B cell (primary cell): ENCODE measurements at regions of chr10 and their contacts with region 1.

Region 1: GRCh38 chr10:71835671-71836595 is 15.1 kb downstream of the PSAP start:
- DNase-seq: peak; percentile 95
- ATAC-seq: peak; percentile 92
- H3K4me3 ChIP-seq: peak overlapping the region; percentile 7 to 49 (median 30)
- H3K4me3 Mint-ChIP-seq: peak overlapping the region; percentile 88
- H3K27ac ChIP-seq: peak overlapping the region; percentile 91 to 94
- H3K27ac Mint-ChIP-seq: peak overlapping the region; percentile 97
- H3K4me1 ChIP-seq: peaks cover 74 to 91% of the 10 kb centered on the region in 2 donors
- H3K4me1 Mint-ChIP-seq: peaks cover 79% of the 10 kb centered on the region
- H3K27me3 ChIP-seq: no peaks in the 10 kb centered on the region
- H3K27me3 Mint-ChIP-seq: no peaks in the 10 kb centered on the region
- CTCF ChIP-seq: no peak

Region 2: GRCh38 chr10:71696628-71697326 is 139.2 kb before region 1 on chr10:
- CTCF ChIA-PET with region 1: interaction called, 7 read pairs
- POLR2A ChIA-PET with region 1: no interaction called
- intact Hi-C with region 1: loop called (anchors 1 kb)
- DNase-seq: peak; percentile 69
- ATAC-seq: no peak
- H3K4me3 ChIP-seq: no peak overlapping the region
- H3K4me3 Mint-ChIP-seq: no peak overlapping the region
- H3K27ac ChIP-seq: no peak overlapping the region
- H3K27ac Mint-ChIP-seq: peak overlapping the region; percentile 20
- H3K4me1 ChIP-seq: peaks cover 39 to 55% of the 10 kb centered on the region in 2 donors
- H3K4me1 Mint-ChIP-seq: peaks cover 53% of the 10 kb centered on the region
- H3K27me3 ChIP-seq: peaks cover 0 to 6% (median 0%) of the 10 kb centered on the region in 4 experiments
- H3K27me3 Mint-ChIP-seq: no peaks in the 10 kb centered on the region
- CTCF ChIP-seq: peak; percentile 84

Region 3: GRCh38 chr10:71850637-71851464 is 14.9 kb after region 1 on chr10 and contains the start of gene PSAP:
- CTCF ChIA-PET with region 1: interaction called, 32 read pairs
- POLR2A ChIA-PET with region 1: interaction called, 22 read pairs
- intact Hi-C with region 1: loop called (anchors 1 kb)
- DNase-seq: peak; percentile 96
- ATAC-seq: peak; percentile 97
- H3K4me3 ChIP-seq: peak within 1 kb of the TSS; percentile 72 to 95 (median 91)
- H3K4me3 Mint-ChIP-seq: peak within 1 kb of the TSS; percentile 99
- H3K27ac ChIP-seq: peak within 1 kb of the TSS; percentile 65 to 91
- H3K27ac Mint-ChIP-seq: peak within 1 kb of the TSS; percentile 94
- H3K4me1 ChIP-seq: peaks cover 35 to 51% of the 10 kb centered on the region in 2 donors
- H3K4me1 Mint-ChIP-seq: peaks cover 57% of the 10 kb centered on the region
- H3K27me3 ChIP-seq: no peaks in the 10 kb centered on the region
- H3K27me3 Mint-ChIP-seq: no peaks in the 10 kb centered on the region
- CTCF ChIP-seq: no peak
- total RNA-seq, gene PSAP: 509 and 536 TPM in 2 replicates

Region 4: DNA sequence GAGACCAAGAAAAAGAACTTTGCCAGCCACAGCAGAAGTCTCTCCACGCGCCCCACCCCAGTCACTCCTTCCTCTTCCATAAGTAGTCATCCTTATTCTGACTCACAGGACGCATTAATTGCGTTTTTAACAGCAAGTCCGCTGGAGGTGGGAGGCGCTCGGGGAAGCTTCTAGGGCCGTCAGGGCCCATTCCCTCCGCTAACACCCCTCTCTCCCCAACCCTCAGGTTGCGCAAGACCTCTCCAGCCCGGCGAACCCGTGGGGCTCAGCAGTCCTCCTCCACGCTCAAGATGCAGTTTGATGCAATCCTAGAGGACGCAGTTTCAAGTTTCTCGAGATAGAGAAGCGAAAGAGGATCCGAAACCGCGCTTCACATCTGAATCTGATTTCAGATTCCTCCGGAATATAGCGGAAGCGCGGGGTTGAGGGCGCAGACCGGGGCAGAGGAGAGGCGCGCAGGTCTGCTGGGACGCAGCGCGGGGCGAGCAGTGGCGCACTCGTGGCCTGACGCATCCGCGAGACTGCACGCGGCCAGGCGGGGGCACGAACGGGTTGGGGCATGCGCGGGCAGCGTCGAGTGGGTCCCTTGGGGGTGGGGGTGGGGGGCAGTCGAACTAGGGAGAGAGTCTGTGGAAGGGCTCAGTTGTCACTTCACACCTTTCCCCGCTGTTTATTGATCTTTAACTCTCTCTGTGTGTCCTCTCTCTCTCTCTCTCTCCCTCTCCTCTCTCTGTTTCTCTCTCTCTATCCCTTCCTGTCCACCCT is 52.9 kb after region 1 on chr10:
- CTCF ChIA-PET with region 1: interaction called, 236 read pairs
- POLR2A ChIA-PET with region 1: interaction called, 8 read pairs
- intact Hi-C with region 1: loop called (anchors 1 kb)
- DNase-seq: peak; percentile 96
- ATAC-seq: peak; percentile 95
- H3K4me3 ChIP-seq: peak overlapping the region; percentile 36 to 66 (median 54)
- H3K4me3 Mint-ChIP-seq: peak overlapping the region; percentile 87
- H3K27ac ChIP-seq: peak overlapping the region; percentile 71 to 77
- H3K27ac Mint-ChIP-seq: peak overlapping the region; percentile 92
- H3K4me1 ChIP-seq: peaks cover 33 to 40% of the 10 kb centered on the region in 2 donors
- H3K4me1 Mint-ChIP-seq: peaks cover 36% of the 10 kb centered on the region
- H3K27me3 ChIP-seq: no peaks in the 10 kb centered on the region
- H3K27me3 Mint-ChIP-seq: no peaks in the 10 kb centered on the region
- CTCF ChIP-seq: peak; percentile 16

Region 5: DNA sequence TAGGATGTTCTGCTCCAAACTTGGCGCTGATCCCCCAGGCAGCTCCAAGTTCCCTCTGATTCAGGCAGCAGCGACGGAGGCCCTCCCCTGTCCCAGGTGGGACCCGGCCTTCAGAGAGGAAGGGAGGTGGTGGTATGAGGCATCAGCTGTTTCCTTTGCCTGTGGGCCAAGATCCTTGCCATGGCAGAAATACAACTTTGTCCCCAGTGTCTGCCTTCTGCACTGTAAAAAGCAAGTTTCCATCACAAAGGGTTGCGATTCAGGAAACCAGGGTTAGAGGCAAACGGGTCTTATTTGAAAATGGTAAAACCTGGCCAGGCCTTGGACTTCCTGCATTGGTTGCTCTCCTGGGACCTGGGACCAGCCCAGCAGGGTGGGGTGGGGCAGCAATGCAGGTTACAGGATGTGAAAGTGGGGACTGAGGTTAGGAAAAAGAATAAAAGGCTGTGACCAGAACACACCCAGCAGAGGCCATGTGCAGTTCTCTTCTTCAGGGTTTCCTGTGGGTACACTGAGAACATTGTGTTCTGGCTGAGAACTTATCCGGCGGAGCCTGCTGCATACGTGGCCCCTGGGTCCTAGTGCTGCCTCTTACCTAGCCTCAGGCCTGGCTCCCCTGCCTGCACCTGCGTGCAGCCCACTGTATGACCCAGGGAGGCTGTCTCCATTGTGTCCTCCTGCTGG is 412.7 kb after region 1 on chr10:
- CTCF ChIA-PET with region 1: no interaction called
- POLR2A ChIA-PET with region 1: no interaction called
- intact Hi-C with region 1: loop called (anchors 1 kb)
- DNase-seq: peak; percentile 85
- ATAC-seq: peak; percentile 76
- H3K4me3 ChIP-seq: peak overlapping the region in 4 of 5 experiments; percentile 26 to 49 (median 44)
- H3K4me3 Mint-ChIP-seq: peak overlapping the region; percentile 91
- H3K27ac ChIP-seq: peak overlapping the region; percentile 76 to 81
- H3K27ac Mint-ChIP-seq: peak overlapping the region; percentile 98
- H3K4me1 ChIP-seq: peaks cover 78 to 83% of the 10 kb centered on the region in 2 donors
- H3K4me1 Mint-ChIP-seq: peaks cover 80% of the 10 kb centered on the region
- H3K27me3 ChIP-seq: no peaks in the 10 kb centered on the region
- H3K27me3 Mint-ChIP-seq: no peaks in the 10 kb centered on the region
- CTCF ChIP-seq: no peak